IMR-90 (cell line): ENCODE measurements at regions of chr15 and their contacts with region 1.

Region 1: DNA sequence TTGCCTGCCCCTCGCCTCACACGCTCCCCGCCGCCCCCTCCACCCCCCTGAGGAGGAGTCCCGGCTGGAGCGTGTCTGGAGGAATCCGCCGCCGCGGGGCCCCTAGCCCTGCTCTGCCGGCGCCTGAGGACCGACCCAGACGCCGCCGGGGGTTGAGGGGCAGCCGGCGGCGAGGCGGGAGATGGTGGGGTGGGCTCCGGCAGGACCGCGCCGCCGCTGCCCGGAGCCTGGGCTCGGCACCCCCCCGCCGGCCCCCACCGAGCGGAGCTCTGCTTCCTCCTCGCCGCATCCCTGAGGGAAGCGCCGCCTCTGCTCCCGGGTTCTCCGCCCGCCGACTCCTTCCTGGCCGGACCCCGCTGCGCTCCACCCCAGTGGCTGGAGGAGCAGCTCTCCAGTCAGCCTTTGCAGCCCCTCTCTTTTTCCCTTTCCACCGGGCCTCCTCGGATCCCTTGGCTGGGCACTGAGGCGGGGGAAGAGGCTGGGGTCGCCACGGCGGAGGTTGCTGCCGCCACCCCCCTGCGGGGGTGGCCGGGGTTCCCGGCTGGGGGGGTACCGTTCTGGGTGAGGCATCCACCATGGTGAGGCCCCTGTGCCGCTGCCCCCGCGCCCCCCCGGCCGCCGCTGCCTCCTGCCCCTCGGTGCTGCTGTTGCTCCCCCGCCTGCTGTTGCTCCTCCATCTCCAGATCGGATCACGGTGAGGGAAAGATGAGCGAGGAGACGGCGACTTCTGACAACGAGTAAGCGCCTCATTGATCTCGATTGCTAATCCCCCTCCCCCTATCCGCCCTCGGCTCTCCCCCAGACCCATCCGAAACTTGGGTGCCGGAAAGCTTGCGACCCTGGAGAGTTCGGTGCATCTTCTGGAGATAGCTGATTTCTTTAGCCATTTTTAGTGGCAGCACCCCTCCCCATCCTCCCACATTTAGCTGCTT is at the start of gene SPRED1:
- DNase-seq: peak; percentile 48
- ATAC-seq: peak; percentile 50
- H3K4me3 ChIP-seq: peak within 1 kb of the TSS; percentile 95
- H3K27ac ChIP-seq: peak within 1 kb of the TSS; percentile 98
- H3K4me1 ChIP-seq: peaks cover 10% of the 10 kb centered on the region
- H3K27me3 ChIP-seq: no peaks in the 10 kb centered on the region
- CTCF ChIP-seq: no peak
- POLR2A ChIP-seq: no peak
- RAD21 ChIP-seq: no peak
- total RNA-seq, gene SPRED1: 17.9 and 38.3 TPM in 2 replicates

Region 2: DNA sequence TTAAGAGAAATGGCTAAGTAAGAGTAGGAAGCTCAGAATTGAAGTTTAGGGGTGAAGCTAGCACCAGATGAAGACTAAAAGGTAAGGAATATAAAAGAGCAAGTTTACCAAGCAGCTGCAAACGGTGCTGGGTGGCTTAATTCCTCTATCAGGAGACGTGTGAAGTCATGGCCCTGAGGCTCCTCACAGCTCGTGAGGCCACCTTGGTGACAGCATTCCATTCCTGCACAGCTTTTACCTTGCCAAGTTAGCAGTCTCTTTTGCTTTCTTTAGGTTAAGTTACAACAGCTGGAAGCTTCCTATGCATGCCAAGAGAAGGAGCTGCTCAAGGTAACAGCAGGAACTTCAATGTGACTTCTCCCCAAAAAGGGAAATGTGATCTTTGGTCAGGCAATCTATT is 311.9 kb before region 1 on chr15:
- CTCF ChIA-PET with region 1: no interaction called
- POLR2A ChIA-PET with region 1: no interaction called
- dilution Hi-C with region 1: no loop called
- in situ Hi-C with region 1: no loop called
- intact Hi-C with region 1: no loop called
- DNase-seq: no peak
- ATAC-seq: no peak
- H3K4me3 ChIP-seq: no peak overlapping the region
- H3K27ac ChIP-seq: no peak overlapping the region
- H3K4me1 ChIP-seq: no peaks in the 10 kb centered on the region
- H3K27me3 ChIP-seq: peaks cover 1% of the 10 kb centered on the region; the same call in 1 of the 2 replicates
- CTCF ChIP-seq: no peak
- POLR2A ChIP-seq: no peak
- RAD21 ChIP-seq: no peak

Region 3: GRCh38 chr15:38002883-38003477 is 249.8 kb before region 1 on chr15:
- CTCF ChIA-PET with region 1: interaction called, 3 read pairs
- POLR2A ChIA-PET with region 1: interaction called, 4 read pairs
- dilution Hi-C with region 1: no loop called
- in situ Hi-C with region 1: no loop called
- intact Hi-C with region 1: loop called (anchors 1 kb)
- DNase-seq: peak; percentile 84
- ATAC-seq: peak; percentile 98
- H3K4me3 ChIP-seq: no peak overlapping the region
- H3K27ac ChIP-seq: no peak overlapping the region
- H3K4me1 ChIP-seq: no peaks in the 10 kb centered on the region; the same call in 1 of the 2 replicates
- H3K27me3 ChIP-seq: no peaks in the 10 kb centered on the region
- CTCF ChIP-seq: peak; percentile 92
- POLR2A ChIP-seq: peak; percentile 58; the same call in 1 of the 2 replicates
- RAD21 ChIP-seq: peak; percentile 99

Region 4: DNA sequence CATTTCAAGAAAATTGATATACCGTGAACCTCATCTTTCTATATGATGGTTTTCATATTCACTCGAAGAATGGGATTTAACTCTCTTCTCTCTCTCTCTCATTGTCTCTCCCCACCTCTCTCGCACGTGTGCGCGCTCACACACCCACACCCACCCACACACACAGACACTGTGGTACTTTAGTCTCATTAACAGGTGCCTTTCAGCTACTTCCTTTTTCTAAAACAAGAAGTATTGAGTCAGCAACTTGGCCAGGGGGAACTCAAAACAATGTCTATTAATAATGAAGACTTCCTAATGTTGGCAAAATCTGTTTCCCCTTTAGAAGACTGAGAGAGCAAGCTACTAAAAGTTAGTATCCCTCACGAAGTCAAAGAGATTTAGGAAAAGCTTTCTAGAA is 167.6 kb before region 1 on chr15:
- CTCF ChIA-PET with region 1: no interaction called
- POLR2A ChIA-PET with region 1: no interaction called
- dilution Hi-C with region 1: no loop called
- in situ Hi-C with region 1: no loop called
- intact Hi-C with region 1: loop called (anchors 5 kb)
- DNase-seq: no peak
- ATAC-seq: no peak
- H3K4me3 ChIP-seq: no peak overlapping the region
- H3K27ac ChIP-seq: no peak overlapping the region
- H3K4me1 ChIP-seq: peaks cover 6% of the 10 kb centered on the region
- H3K27me3 ChIP-seq: no peaks in the 10 kb centered on the region
- CTCF ChIP-seq: no peak
- POLR2A ChIP-seq: no peak
- RAD21 ChIP-seq: no peak

Region 5: GRCh38 chr15:38297623-38298388 is 45.1 kb after region 1 on chr15:
- CTCF ChIA-PET with region 1: no interaction called
- POLR2A ChIA-PET with region 1: interaction called, 7 read pairs
- dilution Hi-C with region 1: no loop called
- in situ Hi-C with region 1: no loop called
- intact Hi-C with region 1: loop called (anchors 5 kb)
- DNase-seq: peak; percentile 62
- ATAC-seq: no peak
- H3K4me3 ChIP-seq: no peak overlapping the region
- H3K27ac ChIP-seq: no peak overlapping the region
- H3K4me1 ChIP-seq: peaks cover 2% of the 10 kb centered on the region
- H3K27me3 ChIP-seq: no peaks in the 10 kb centered on the region
- CTCF ChIP-seq: no peak
- POLR2A ChIP-seq: no peak
- RAD21 ChIP-seq: no peak

Region 6: DNA sequence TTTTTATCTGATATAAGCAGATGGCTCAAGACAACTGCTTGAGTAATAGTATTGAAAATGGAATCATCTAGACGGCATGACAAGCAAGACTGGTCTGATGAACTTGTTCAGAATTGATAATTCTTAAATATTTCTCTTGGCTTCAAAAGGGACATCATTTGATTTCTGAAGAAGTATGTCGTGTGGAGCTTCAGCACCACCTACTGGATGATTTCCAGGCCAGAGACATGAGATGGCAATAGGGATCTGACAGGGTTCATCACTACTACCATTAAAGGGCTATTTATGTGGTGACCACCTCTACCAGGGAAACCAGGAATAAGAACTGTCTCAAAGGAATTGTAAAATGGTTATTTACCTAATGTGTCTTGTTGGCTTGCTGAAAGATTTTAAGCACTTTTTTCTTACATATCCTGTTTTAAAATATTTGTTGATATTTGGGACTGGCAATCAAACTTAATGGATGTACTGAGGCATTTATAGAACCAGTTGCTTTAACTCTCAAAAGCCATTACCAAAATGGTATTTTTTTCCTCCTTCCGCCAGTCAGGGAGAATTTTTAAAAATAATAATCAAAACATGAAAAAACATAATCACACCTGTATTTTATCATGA is 101.7 kb after region 1 on chr15:
- CTCF ChIA-PET with region 1: interaction called, 3 read pairs
- POLR2A ChIA-PET with region 1: interaction called, 5 read pairs
- dilution Hi-C with region 1: no loop called
- in situ Hi-C with region 1: loop called (anchors 10 kb)
- intact Hi-C with region 1: loop called (anchors 1 kb)
- DNase-seq: peak; percentile 75
- ATAC-seq: peak; percentile 72
- H3K4me3 ChIP-seq: no peak overlapping the region
- H3K27ac ChIP-seq: no peak overlapping the region
- H3K4me1 ChIP-seq: peaks cover 7% of the 10 kb centered on the region; the same call in 1 of the 2 replicates
- H3K27me3 ChIP-seq: no peaks in the 10 kb centered on the region
- CTCF ChIP-seq: peak; percentile 80
- POLR2A ChIP-seq: no peak
- RAD21 ChIP-seq: peak; percentile 85

Region 7: GRCh38 chr15:38414357-38414756 is 161.6 kb after region 1 on chr15:
- CTCF ChIA-PET with region 1: interaction called, 4 read pairs
- POLR2A ChIA-PET with region 1: no interaction called
- dilution Hi-C with region 1: no loop called
- in situ Hi-C with region 1: no loop called
- intact Hi-C with region 1: loop called (anchors 2 kb)
- DNase-seq: peak; percentile 75
- ATAC-seq: peak; percentile 100
- H3K4me3 ChIP-seq: no peak overlapping the region
- H3K27ac ChIP-seq: no peak overlapping the region
- H3K4me1 ChIP-seq: no peaks in the 10 kb centered on the region
- H3K27me3 ChIP-seq: peaks cover 32% of the 10 kb centered on the region
- CTCF ChIP-seq: peak; percentile 86
- POLR2A ChIP-seq: 0 out of 2 replicates have a peak, but pooled peaks have one; percentile 41
- RAD21 ChIP-seq: peak; percentile 95